ENCODE measurements at regions of chr9 and their contacts with region 1.

Region 1: GRCh38 chr9:87324613-87325194 is 173.0 kb upstream of the DAPK1 start:
- DNase-seq: peak; percentile 3 to 43
- H3K4me3 ChIP-seq: no peak overlapping the region
- H3K27ac ChIP-seq: no peak overlapping the region
- H3K4me1 ChIP-seq: peaks cover 10% of the 10 kb centered on the region; the same call in 1 of the 2 replicates
- H3K27me3 ChIP-seq: no peaks in the 10 kb centered on the region
- CTCF ChIP-seq: peak; percentile 95

Region 2: DNA sequence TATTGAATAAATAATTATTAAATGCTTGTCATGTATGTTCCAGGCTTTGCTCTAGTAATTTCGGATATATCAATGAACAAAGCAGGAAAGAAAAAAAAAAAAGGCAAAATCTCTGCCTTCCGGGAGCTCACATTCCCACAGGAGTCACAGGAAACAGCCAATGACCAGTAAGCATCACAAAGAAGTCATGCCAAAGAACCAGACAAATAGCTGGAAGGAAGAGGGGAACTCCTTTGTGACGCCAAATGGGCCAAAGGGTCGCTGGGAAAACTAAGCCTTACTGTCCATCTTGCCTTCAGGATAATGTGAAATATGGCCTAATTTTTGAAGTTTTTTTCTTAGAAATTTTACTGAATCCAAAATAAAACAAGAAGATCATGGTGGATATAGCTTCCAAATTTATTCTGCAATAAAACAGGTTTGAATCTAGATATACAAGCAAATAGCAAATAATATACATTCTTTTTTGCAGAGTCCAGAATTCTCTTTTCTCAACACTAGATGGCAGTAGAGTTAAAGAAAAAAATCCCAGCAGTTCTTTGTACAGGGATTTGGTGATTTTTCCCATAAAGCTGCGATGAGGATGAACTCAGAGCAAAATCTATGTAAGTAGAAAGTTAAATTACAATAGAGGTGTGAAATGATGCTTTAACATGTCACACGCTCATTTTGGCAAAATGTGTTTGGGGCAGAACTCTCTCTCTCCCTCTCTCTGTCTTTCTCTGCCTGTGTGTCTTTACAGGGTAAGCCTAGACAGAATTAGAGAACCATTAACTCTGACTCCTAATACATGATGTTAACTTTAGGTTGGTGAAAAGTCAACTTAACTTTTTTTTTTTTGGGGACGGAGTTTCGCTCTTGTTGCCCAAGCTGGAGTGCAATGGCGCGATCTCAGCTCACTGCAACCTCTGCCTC is 910.5 kb before region 1 on chr9:
- CTCF ChIA-PET with region 1: no interaction called
- POLR2A ChIA-PET with region 1: no interaction called
- intact Hi-C with region 1: loop called (anchors 2 kb)
- DNase-seq: no peak
- H3K4me3 ChIP-seq: no peak overlapping the region
- H3K27ac ChIP-seq: no peak overlapping the region
- H3K4me1 ChIP-seq: no peaks in the 10 kb centered on the region
- H3K27me3 ChIP-seq: no peaks in the 10 kb centered on the region
- CTCF ChIP-seq: peak; percentile 81

Region 3: GRCh38 chr9:86434039-86434726 is 890.5 kb before region 1 on chr9:
- CTCF ChIA-PET with region 1: interaction called, 6 read pairs
- POLR2A ChIA-PET with region 1: no interaction called
- intact Hi-C with region 1: loop called (anchors 1 kb)
- DNase-seq: peak in 1 of 2 experiments; percentile 2
- H3K4me3 ChIP-seq: no peak overlapping the region
- H3K27ac ChIP-seq: no peak overlapping the region
- H3K4me1 ChIP-seq: no peaks in the 10 kb centered on the region
- H3K27me3 ChIP-seq: no peaks in the 10 kb centered on the region
- CTCF ChIP-seq: peak; percentile 89

Region 4: DNA sequence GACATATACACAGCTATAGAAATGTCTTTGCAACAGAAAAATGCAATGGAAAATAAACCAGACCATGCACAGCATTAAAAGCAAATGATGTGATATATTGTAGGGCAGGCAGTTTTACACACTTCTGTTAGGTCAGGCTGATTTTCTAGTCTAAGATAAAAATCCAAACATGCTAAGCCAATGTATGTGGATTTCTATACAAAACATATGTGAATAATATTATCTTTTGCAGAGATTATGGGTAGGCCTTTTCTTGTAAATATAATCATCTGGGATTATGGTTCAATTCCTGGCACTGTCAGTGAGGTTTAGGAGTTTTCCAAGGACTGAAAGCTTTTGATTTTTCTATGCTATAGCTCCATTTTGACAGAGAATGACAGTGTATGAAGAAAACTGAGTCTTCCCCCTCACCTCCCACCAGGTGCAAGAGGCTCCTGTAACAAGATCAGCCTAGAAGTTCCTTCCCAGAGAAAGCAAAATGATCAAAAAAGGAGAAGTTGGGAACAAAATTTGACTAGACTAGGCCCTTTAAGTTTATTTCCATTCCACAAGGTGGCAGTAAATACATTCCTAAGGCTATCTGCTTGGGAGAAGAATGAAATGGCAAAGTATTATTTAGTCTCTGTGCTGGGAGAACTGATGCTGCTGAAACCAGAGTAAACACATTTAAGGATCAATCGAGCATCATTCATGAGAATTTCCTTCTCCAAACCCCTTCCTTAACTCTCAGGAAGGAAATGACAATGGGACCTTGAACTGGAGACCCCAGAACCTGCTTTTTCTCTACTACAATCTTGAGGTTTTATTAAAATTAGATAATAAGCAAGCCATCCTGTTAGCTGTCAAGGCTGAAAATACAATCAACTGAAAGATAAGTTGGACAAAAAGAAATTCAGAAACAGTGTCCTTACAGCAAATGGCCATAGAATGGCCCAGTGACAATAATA is 837.5 kb before region 1 on chr9:
- CTCF ChIA-PET with region 1: interaction called, 3 read pairs
- POLR2A ChIA-PET with region 1: no interaction called
- intact Hi-C with region 1: loop called (anchors 1 kb)
- DNase-seq: peak in 1 of 2 experiments; percentile 54
- H3K4me3 ChIP-seq: no peak overlapping the region
- H3K27ac ChIP-seq: no peak overlapping the region
- H3K4me1 ChIP-seq: 0 out of 2 replicates have a peak, but pooled peaks cover 6% of the 10 kb centered on the region
- H3K27me3 ChIP-seq: no peaks in the 10 kb centered on the region
- CTCF ChIP-seq: peak; percentile 85

Region 5: GRCh38 chr9:86948074-86948929 is 376.4 kb before region 1 on chr9:
- CTCF ChIA-PET with region 1: no interaction called
- POLR2A ChIA-PET with region 1: no interaction called
- intact Hi-C with region 1: loop called (anchors 5 kb)
- DNase-seq: peak; percentile 57
- H3K4me3 ChIP-seq: peak overlapping the region; percentile 63
- H3K27ac ChIP-seq: no peak overlapping the region
- H3K4me1 ChIP-seq: 0 out of 2 replicates have a peak, but pooled peaks cover 4% of the 10 kb centered on the region
- H3K27me3 ChIP-seq: no peaks in the 10 kb centered on the region
- CTCF ChIP-seq: peak; percentile 77

Region 6: DNA sequence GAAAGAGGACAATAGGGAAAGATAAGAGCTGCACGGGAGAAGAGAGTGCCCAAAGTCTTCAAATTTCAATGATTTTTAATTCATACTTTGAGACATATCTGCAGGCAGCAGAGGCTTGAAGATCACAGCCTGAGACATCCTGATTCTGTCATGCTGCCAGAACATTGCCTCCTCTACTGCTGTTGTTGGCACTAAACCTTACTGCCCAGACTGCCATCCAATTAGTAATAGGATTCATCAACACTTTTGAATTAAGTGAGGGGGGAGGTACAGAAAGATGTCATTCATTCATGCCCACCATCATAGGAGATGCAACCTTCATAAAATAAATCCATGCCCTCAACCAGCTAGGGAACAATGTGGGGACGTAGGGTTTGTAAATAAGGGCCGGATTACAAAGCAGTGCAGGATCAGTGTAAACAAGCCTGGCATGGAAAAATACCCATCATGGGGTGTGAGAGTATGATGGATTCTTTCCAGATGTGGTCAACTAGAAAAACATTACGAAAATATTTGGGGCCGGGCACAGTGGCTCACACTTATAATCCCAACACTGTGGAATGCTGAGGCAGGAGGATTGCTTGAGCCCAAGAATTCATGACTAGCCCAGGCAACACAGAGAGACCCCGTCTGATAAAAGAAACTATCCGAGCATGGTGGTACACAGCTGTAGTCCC is 50.8 kb after region 1 on chr9:
- CTCF ChIA-PET with region 1: no interaction called
- POLR2A ChIA-PET with region 1: no interaction called
- intact Hi-C with region 1: no loop called
- DNase-seq: peak; percentile 65 to 75
- H3K4me3 ChIP-seq: no peak overlapping the region
- H3K27ac ChIP-seq: peak overlapping the region; percentile 66
- H3K4me1 ChIP-seq: peaks cover 48% of the 10 kb centered on the region
- H3K27me3 ChIP-seq: no peaks in the 10 kb centered on the region
- CTCF ChIP-seq: no peak

Measured in PC-9 (cell line).